PC-3 (cell line): ENCODE measurements at regions of chr2 and their contacts with region 1.

Region 1: DNA sequence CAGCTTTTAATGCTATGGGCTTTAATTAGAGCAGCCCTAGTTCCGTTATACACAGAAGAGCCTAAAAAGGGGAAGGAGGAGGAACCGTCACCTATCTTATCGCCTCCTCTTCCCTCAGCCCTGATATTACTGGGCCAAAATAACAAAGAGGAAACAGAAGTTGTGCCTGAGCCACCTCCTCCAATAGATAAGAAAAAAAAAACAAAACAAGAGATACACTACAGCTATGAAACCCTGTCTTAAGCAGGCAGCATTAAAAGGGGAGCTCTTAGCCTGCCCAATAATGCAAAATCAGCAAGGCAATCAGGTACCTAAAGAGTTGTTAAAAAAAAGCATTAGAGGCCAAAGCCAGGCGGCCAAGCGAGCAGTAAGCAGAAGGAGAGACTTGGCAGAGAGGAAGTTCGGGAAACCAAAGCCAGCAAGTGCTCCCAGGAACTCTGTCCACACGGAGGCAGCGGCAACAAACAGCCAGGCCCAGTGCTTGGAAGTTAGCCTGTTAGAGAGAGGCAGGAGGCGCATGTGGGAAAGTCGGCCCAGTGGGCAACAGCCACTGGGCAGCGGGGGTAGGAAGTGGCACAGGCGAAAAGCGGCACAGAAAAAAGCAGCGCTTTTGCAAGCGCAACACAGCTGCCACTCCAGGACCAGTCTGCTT is 41.8 kb upstream of the PDK1 start:
- DNase-seq: no peak
- ATAC-seq: no peak
- H3K4me3 ChIP-seq: no peak overlapping the region
- H3K27ac ChIP-seq: no peak overlapping the region
- H3K4me1 ChIP-seq: no peaks in the 10 kb centered on the region
- H3K27me3 ChIP-seq: no peaks in the 10 kb centered on the region
- CTCF ChIP-seq: no peak

Region 2: DNA sequence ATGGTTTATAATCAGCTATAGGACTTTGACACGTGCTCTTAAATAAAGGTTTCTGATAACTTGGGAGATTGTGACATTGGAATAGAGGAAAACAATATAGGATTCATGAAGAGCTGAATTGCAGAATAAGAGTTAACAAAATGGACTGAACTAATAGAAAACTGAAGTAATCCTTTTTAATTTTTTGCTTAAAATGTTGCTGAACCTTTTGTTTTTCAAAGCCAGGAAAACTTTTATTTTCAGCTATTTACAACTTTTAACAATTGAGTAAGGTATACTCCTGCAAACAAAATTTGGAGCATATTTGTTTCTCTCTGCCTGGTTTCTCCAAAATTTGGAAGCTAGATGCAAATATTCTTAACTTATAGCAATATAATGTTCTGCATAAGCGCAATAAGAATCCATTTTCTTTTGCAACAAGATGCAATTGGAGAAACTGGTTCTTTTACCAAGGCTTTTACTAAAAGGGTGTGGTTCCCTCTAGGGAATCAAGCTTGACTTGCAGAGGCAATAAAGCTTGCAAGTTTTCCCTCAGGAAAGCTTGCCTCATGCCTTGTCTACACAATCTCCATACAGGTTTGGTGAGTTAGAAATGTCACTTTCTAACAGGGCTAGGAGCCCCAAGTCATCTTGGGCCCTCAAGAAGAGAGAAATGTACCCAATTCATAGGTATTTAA is 31.5 kb after region 1 on chr2:
- CTCF ChIA-PET with region 1: no interaction called
- POLR2A ChIA-PET with region 1: no interaction called
- intact Hi-C with region 1: loop called (anchors 5 kb)
- DNase-seq: peak; percentile 30
- ATAC-seq: no peak
- H3K4me3 ChIP-seq: no peak overlapping the region
- H3K27ac ChIP-seq: no peak overlapping the region
- H3K4me1 ChIP-seq: no peaks in the 10 kb centered on the region
- H3K27me3 ChIP-seq: no peaks in the 10 kb centered on the region
- CTCF ChIP-seq: no peak